A549 (cell line): ENCODE measurements at regions of chr15 and their contacts with region 1.

Region 1: GRCh38 chr15:69475769-69476358 is 23.2 kb downstream of the RPLP1 start:
- DNase-seq: peak; percentile 83 to 97
- ATAC-seq: peak; percentile 85 to 92
- H3K4me3 ChIP-seq: no peak overlapping the region
- H3K27ac ChIP-seq: no peak overlapping the region
- H3K4me1 ChIP-seq: no peaks in the 10 kb centered on the region
- CTCF ChIP-seq: peak; percentile 95
- EP300 ChIP-seq: no peak
- POLR2A ChIP-seq: no peak
- RAD21 ChIP-seq: peak; percentile 98 to 99

Region 2: GRCh38 chr15:69417581-69417980 is 58.3 kb before region 1 on chr15:
- CTCF ChIA-PET with region 1: no interaction called
- POLR2A ChIA-PET with region 1: no interaction called
- DNase-seq: no peak
- ATAC-seq: no peak
- H3K4me3 ChIP-seq: no peak overlapping the region
- H3K27ac ChIP-seq: no peak overlapping the region
- H3K4me1 ChIP-seq: peaks cover 25% of the 10 kb centered on the region
- CTCF ChIP-seq: no peak
- EP300 ChIP-seq: no peak
- POLR2A ChIP-seq: no peak
- RAD21 ChIP-seq: no peak

Region 3: DNA sequence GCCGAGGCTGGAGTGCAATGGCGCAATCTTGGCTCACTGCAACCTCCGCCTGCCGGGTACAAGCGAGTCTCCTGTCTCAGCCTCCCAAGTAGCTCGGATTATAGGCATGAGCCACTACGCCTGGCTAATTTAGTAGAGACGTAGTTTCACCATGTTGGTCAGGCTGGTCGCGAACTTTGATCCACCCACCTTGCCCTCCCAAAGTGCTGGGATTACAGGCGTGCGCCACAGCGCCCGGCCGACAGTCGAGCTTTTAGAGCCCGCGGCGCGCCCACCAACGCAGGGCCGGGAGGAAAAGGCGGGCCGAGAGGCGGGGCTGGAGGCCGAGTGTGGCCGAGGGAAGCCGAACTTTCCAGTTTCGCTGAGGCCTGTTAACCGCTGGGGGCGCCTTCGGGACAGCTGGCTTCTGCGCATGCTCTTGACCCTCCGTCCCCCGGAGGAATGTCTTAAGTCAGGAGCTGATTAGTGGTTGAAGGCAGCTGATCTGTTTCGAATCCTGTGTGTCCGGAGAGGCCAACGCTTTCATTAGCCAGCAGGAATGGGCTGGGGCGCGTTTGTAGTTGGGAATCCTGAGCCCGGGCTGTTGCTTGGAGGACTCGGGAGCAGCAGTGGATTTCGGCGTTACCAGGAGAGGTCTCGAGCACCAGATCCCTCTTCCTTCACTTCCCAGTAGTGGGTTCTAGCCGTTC is 13.2 kb before region 1 on chr15:
- CTCF ChIA-PET with region 1: interaction called, 152 read pairs
- POLR2A ChIA-PET with region 1: interaction called, 8 read pairs
- DNase-seq: peak; percentile 99 to 100
- ATAC-seq: peak; percentile 78 to 88
- H3K4me3 ChIP-seq: peak overlapping the region; percentile 59
- H3K27ac ChIP-seq: peak overlapping the region; percentile 90 to 92
- H3K4me1 ChIP-seq: peaks cover 31% of the 10 kb centered on the region
- CTCF ChIP-seq: peak; percentile 82
- EP300 ChIP-seq: no peak
- POLR2A ChIP-seq: peak; percentile 54
- RAD21 ChIP-seq: no peak

Region 4: DNA sequence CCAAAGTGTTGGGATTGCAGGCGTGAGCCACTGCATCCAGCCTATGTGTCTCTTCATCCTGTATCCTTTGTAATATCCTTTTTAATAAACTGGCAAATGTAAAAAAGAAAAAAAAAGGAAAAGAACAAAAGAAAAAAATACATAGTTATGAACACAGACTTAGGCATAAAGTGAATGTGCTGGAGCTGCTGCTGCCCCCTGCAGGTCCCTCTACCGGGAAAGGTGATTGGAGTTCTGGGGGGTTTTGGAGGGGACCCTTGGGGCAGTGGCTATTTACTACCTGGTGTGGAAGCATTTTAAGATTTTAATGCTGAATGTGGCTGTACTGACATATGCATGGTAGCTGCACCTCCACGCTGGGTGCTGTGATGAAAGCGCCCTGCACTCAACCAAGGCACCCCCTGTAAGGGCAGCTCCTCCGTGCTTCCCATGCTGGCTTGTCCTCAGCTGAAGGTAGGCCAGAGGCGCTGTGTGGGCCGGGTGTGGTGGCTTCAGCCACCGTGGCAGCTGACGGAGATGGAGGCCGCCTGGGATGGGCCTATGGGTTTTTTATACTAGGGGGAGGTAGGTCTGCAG is 26.7 kb after region 1 on chr15:
- CTCF ChIA-PET with region 1: interaction called, 19 read pairs
- POLR2A ChIA-PET with region 1: no interaction called
- DNase-seq: no peak
- ATAC-seq: no peak; a peak in 1 of 6 replicates
- H3K4me3 ChIP-seq: no peak overlapping the region
- H3K27ac ChIP-seq: no peak overlapping the region
- H3K4me1 ChIP-seq: no peaks in the 10 kb centered on the region
- CTCF ChIP-seq: peak; percentile 21; the same call in 2 of the 3 replicates
- EP300 ChIP-seq: no peak
- POLR2A ChIP-seq: no peak
- RAD21 ChIP-seq: no peak

Region 5: DNA sequence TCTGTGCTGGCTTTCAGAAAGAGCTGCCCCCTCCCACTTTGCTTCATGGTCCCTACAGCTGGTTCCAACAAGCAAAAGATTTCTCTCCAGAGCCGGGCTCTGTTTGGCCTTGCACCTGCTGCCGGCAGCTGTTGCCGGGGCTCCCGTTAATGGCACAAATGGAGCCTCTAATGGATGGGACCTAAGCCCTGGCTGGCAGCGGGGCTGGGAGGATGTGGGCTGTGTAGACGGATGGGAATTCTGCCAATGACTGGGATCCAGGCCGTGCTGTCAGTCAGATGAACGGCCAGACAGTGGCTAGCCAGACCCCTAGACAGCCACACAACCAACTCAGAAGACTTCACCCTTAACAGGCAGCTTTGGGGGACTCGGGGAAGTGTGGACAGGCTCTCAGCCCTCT is 64.8 kb after region 1 on chr15:
- CTCF ChIA-PET with region 1: interaction called, 12 read pairs
- POLR2A ChIA-PET with region 1: no interaction called
- DNase-seq: no peak
- ATAC-seq: no peak
- H3K4me3 ChIP-seq: no peak overlapping the region
- H3K27ac ChIP-seq: no peak overlapping the region
- H3K4me1 ChIP-seq: no peaks in the 10 kb centered on the region
- CTCF ChIP-seq: no peak
- EP300 ChIP-seq: no peak
- POLR2A ChIP-seq: no peak
- RAD21 ChIP-seq: no peak

Region 6: GRCh38 chr15:70459312-70459875 is 983.5 kb after region 1 on chr15:
- CTCF ChIA-PET with region 1: interaction called, 91 read pairs
- POLR2A ChIA-PET with region 1: no interaction called
- DNase-seq: no peak
- ATAC-seq: peak in 1 of 2 experiments; percentile 22; a peak in 1 of 6 replicates
- H3K4me3 ChIP-seq: no peak overlapping the region
- H3K27ac ChIP-seq: peak overlapping the region in 1 of 2 experiments; percentile 1; a peak in 1 of 6 replicates
- H3K4me1 ChIP-seq: peaks cover 4% of the 10 kb centered on the region; the same call in 1 of the 3 replicates
- CTCF ChIP-seq: no peak
- EP300 ChIP-seq: no peak
- POLR2A ChIP-seq: no peak
- RAD21 ChIP-seq: no peak